ENCODE measurements at regions of chr6 and their contacts with region 1.

Region 1: DNA sequence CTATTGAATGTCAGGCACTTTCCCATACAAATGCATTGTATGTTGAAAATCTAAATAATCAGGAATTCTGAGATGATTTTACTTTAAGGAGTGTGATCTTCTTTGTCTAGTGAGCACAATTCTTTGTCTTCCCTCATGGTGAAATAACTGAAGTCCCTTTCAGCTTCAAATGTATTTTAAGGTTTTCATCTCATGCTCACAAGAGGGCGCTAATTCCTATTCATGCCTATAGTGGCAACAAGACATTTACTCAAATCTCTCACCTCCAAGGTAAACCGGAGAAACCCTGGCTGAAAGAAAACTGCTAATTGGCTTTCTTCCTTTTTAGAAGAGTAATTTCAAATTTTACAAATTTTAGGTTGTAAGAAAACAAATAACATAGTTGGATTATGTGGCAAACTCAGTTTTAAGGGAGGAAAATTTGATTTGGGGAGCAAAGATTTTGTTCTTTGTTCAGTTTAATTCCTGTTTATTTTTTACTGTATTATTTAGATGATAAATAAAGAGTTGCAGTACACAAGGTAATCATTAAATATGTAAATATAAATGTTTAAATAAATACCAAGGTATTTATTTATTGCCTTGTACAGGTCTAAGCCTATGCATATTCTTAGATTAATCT is 69.1 kb downstream of the SLC35F1 start:
- DNase-seq: no peak
- ATAC-seq: no peak
- H3K4me3 ChIP-seq: no peak overlapping the region
- H3K27ac ChIP-seq: no peak overlapping the region
- H3K4me1 ChIP-seq: peaks cover 0 to 6% (median 0%) of the 10 kb centered on the region in 12 donors
- H3K27me3 ChIP-seq: no peaks in the 10 kb centered on the region
- CTCF ChIP-seq: peak; percentile 46 to 72 (median 60)
- POLR2A ChIP-seq: no peak

Region 2: GRCh38 chr6:117906853-117907599 is 69.1 kb before region 1 on chr6 and contains the start of gene SLC35F1:
- intact Hi-C with region 1: loop called in 1 of 10 experiments (anchors 2 kb)
- DNase-seq: peak; percentile 15 to 63 (median 27)
- ATAC-seq: peak in 3 of 4 donors; percentile 69 to 79 (median 71)
- H3K4me3 ChIP-seq: peak within 1 kb of the TSS; percentile 40 to 80 (median 58)
- H3K27ac ChIP-seq: peak within 1 kb of the TSS in 1 of 12 donors; percentile 25
- H3K4me1 ChIP-seq: peaks cover 0 to 23% (median 7%) of the 10 kb centered on the region in 12 donors
- H3K27me3 ChIP-seq: peaks cover 9 to 60% (median 20%) of the 10 kb centered on the region in 9 donors
- CTCF ChIP-seq: peak in 10 of 12 donors; percentile 8 to 53 (median 38)
- POLR2A ChIP-seq: no peak
- total RNA-seq, gene SLC35F1: 2.5 to 11.6 (median 5.0) TPM

Region 3: DNA sequence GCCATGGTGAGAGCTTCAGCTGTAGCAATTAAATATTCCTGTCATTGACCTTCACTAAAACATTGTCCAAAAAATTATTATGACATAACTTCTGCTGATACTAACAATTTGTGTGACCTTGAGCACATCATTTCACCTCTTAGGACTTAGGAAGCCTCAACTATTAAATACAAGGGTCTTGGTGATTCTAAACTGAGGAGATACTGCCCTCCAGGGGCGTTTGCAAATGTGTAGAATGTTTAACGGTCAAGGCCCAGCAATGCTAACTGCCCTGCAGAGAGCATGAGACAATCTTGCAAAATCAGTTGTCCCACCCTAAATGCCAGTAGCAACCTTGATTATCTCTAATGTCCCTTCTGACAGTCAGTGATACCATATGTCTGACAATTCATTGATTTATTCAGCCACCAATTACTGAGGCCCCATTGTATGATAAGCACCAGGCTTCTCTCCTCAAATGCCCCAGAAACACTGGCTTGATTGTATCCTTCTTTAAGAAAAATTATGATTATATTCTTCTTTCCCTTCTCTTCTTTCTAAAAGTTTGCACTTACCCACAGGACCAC is 287.9 kb after region 1 on chr6:
- intact Hi-C with region 1: loop called (anchors 1 to 10 kb)
- DNase-seq: peak in 1 of 5 donors; percentile 16
- ATAC-seq: peak; percentile 64 to 74 (median 68)
- H3K4me3 ChIP-seq: no peak overlapping the region
- H3K27ac ChIP-seq: no peak overlapping the region
- H3K4me1 ChIP-seq: no peaks in the 10 kb centered on the region
- H3K27me3 ChIP-seq: no peaks in the 10 kb centered on the region
- CTCF ChIP-seq: peak in 11 of 12 donors; percentile 32 to 65 (median 54)
- POLR2A ChIP-seq: no peak

Region 4: DNA sequence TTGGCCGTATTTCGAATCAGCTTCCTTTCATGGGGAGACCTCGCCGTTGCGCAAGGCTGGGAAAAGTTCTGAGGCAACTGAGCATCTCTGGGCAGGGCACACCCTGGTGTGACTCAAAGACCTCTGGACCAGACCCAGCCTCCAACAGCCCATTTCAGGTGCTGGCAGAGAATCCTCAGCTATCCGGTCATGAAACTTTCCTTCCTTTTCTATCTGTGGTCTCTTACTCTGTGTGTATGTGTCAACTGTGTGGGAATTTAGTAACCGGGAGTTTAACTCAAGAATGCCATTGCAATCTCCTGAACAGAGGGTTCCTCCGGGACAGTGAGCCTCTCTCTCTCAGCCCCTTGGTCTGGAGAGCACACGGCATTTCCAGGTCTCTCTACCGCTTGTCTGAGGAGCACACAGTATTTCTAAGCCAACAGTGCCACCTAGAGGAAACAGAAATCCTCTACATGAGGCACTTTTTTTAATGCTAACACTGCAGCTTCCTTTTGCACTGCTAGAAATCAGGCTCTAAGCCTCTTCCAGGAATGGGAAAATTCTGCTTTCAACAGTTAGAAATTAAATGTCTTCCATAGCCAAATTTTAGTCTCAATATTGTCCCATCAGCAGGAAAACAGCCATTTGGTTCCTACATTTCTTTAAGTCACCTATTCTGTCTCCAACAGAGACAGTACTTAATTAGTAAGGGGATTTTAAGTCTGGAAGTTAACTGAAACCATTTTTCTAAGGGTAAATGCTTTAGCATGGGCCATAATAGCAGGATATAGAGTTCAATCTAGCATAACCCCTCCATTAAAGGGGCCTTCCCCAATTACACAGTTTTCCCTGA is 604.7 kb after region 1 on chr6:
- intact Hi-C with region 1: loop called in 2 of 10 experiments (anchors 5 to 10 kb)
- DNase-seq: peak in 3 of 5 donors; percentile 30 to 51 (median 35)
- ATAC-seq: peak; percentile 76 to 95 (median 92)
- H3K4me3 ChIP-seq: peak overlapping the region in 1 of 12 donors; percentile 13
- H3K27ac ChIP-seq: peak overlapping the region in 1 of 12 donors; percentile 46
- H3K4me1 ChIP-seq: peaks cover 0 to 20% (median 4%) of the 10 kb centered on the region in 12 donors
- H3K27me3 ChIP-seq: no peaks in the 10 kb centered on the region
- CTCF ChIP-seq: peak; percentile 54 to 76 (median 69)
- POLR2A ChIP-seq: no peak